Transverse colon (tissue), 4 donors: ENCODE measurements at regions of chr19 and their contacts with region 1.

Region 1: DNA sequence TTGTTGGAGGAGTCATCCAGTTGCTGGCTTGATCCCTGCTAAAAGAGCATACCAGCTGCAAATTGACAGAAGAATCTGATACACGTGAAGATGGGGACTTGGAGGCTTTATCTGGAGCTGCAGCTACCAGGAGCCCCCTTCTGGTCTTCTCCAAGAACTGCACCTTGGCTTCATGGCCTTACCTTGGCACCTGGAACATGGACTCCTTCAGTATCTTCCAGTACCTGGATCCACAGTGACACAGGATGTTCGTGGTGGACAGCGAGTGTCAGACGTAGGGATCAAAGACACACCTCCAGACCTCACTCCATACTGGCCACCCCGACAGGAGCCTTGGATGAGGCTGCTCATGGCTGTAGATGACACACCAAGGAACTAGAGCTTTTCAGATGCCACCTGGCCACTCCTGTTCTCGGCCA is 9.9 kb upstream of the ACSBG2 start:
- DNase-seq: peak; percentile 71
- H3K4me3 ChIP-seq: no peak overlapping the region
- H3K27ac ChIP-seq: no peak overlapping the region
- H3K4me1 ChIP-seq: no peaks in the 10 kb centered on the region
- H3K27me3 ChIP-seq: no peaks in the 10 kb centered on the region
- CTCF ChIP-seq: peak; percentile 94 to 98 (median 95)
- EP300 ChIP-seq: no peak
- POLR2A ChIP-seq: no peak

Region 2: GRCh38 chr19:5595129-5595528 is 530.5 kb before region 1 on chr19:
- in situ Hi-C with region 1: no loop called
- intact Hi-C with region 1: no loop called
- DNase-seq: no peak
- H3K4me3 ChIP-seq: no peak overlapping the region
- H3K27ac ChIP-seq: no peak overlapping the region
- H3K4me1 ChIP-seq: no peaks in the 10 kb centered on the region
- H3K27me3 ChIP-seq: no peaks in the 10 kb centered on the region
- CTCF ChIP-seq: no peak
- EP300 ChIP-seq: no peak
- POLR2A ChIP-seq: no peak

Region 3: DNA sequence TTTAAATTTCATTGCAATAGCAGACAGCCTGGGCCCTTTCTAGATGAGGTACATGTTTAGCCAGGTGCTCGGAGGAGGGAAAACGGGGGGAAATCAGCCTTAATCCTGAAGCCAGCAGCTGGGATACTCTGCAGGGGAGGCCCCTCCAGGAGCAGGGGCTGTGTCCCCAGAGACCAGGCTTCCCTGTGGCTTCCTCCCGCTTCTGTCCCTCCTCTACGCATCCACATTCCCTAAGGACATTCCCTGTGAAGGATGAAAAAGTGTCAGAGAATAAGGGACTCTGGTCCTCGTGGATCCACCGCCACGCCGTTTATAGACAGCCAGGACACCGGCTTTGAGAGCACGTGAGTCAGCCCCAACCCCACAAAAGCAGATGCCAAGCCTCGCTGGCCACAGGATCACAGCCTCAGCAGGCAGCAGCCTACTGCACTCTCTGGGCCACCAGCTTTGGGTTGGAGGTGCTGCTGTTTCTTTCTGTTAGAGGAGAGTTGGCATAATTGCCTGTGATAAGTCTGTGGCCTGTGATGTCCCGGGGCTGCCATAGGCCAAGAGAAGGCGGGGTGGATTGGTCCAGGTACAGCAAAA is 110.9 kb before region 1 on chr19:
- in situ Hi-C with region 1: no loop called
- intact Hi-C with region 1: no loop called
- DNase-seq: no peak
- H3K4me3 ChIP-seq: no peak overlapping the region
- H3K27ac ChIP-seq: no peak overlapping the region
- H3K4me1 ChIP-seq: no peaks in the 10 kb centered on the region
- H3K27me3 ChIP-seq: no peaks in the 10 kb centered on the region
- CTCF ChIP-seq: no peak
- EP300 ChIP-seq: no peak
- POLR2A ChIP-seq: no peak

Region 4: GRCh38 chr19:6039541-6040225 is 85.9 kb before region 1 on chr19:
- in situ Hi-C with region 1: loop called in 1 of 4 experiments (anchors 5 kb)
- intact Hi-C with region 1: no loop called
- DNase-seq: no peak
- H3K4me3 ChIP-seq: no peak overlapping the region
- H3K27ac ChIP-seq: no peak overlapping the region
- H3K4me1 ChIP-seq: no peaks in the 10 kb centered on the region
- H3K27me3 ChIP-seq: no peaks in the 10 kb centered on the region
- CTCF ChIP-seq: no peak
- EP300 ChIP-seq: no peak
- POLR2A ChIP-seq: no peak

Region 5: DNA sequence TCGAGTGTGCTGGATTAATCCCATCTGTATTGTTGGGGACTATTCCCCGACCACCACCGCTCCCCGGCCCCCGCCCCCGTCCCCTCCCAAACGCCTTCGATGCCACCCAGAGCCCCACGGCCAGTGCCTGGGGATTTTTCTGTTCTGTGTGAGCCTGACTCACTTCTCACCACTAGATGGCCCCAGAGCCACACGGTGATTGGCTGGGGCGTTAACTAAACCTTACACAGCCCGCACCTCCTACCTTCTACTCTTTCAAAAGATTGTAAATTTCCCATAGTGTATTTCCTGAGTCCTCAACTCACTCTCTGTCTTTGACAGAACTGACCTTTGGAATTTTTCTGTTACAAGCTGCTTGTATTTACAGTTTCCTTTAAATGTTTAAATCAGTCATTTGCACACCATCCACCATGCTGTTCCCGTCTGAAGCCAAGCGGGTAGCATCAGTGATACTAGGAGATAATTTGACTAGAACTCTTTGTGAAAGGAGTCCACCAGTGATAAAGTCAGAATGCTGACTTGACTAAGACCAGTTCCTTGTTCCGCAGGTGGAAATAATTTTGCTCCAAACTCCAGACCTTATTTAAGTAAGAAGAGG is 76.7 kb before region 1 on chr19:
- in situ Hi-C with region 1: loop called (anchors 5 to 10 kb)
- intact Hi-C with region 1: loop called (anchors 2 kb)
- DNase-seq: peak; percentile 83
- H3K4me3 ChIP-seq: no peak overlapping the region
- H3K27ac ChIP-seq: peak overlapping the region in 1 of 4 donors; percentile 35
- H3K4me1 ChIP-seq: peaks cover 0 to 10% (median 10%) of the 10 kb centered on the region in 4 donors
- H3K27me3 ChIP-seq: no peaks in the 10 kb centered on the region
- CTCF ChIP-seq: peak; percentile 86 to 92 (median 88)
- EP300 ChIP-seq: no peak
- POLR2A ChIP-seq: no peak

Region 6: GRCh38 chr19:6056801-6057650 is 68.6 kb before region 1 on chr19:
- in situ Hi-C with region 1: loop called in 1 of 4 experiments (anchors 10 kb)
- intact Hi-C with region 1: no loop called
- DNase-seq: peak; percentile 70
- H3K4me3 ChIP-seq: peak overlapping the region in 1 of 4 donors; percentile 21
- H3K27ac ChIP-seq: peak overlapping the region; percentile 90 to 95 (median 92)
- H3K4me1 ChIP-seq: peaks cover 45 to 63% (median 53%) of the 10 kb centered on the region in 4 donors
- H3K27me3 ChIP-seq: no peaks in the 10 kb centered on the region
- CTCF ChIP-seq: no peak
- EP300 ChIP-seq: peak; percentile 73
- POLR2A ChIP-seq: peak; percentile 57

Region 7: GRCh38 chr19:6318772-6319171 is 193.2 kb after region 1 on chr19:
- in situ Hi-C with region 1: loop called in 1 of 4 experiments (anchors 25 kb)
- intact Hi-C with region 1: no loop called
- DNase-seq: no peak
- H3K4me3 ChIP-seq: no peak overlapping the region
- H3K27ac ChIP-seq: no peak overlapping the region
- H3K4me1 ChIP-seq: no peaks in the 10 kb centered on the region
- H3K27me3 ChIP-seq: peaks cover 11% of the 10 kb centered on the region
- CTCF ChIP-seq: no peak
- EP300 ChIP-seq: no peak
- POLR2A ChIP-seq: no peak